Activated CD4-positive, alpha-beta memory T cell treated with anti-CD3 and anti-CD28 coated beads for 36 hours (primary cell): ENCODE measurements at regions of chr16 and their contacts with region 1.

Region 1: GRCh38 chr16:57277586-57277985 is 6.9 kb downstream of the PLLP start:
- DNase-seq: peak; percentile 84
- H3K4me3 Mint-ChIP-seq: peak overlapping the region; percentile 20
- H3K27ac Mint-ChIP-seq: peak overlapping the region; percentile 5
- H3K4me1 Mint-ChIP-seq: peaks cover 22% of the 10 kb centered on the region
- H3K27me3 Mint-ChIP-seq: no peaks in the 10 kb centered on the region

Region 2: DNA sequence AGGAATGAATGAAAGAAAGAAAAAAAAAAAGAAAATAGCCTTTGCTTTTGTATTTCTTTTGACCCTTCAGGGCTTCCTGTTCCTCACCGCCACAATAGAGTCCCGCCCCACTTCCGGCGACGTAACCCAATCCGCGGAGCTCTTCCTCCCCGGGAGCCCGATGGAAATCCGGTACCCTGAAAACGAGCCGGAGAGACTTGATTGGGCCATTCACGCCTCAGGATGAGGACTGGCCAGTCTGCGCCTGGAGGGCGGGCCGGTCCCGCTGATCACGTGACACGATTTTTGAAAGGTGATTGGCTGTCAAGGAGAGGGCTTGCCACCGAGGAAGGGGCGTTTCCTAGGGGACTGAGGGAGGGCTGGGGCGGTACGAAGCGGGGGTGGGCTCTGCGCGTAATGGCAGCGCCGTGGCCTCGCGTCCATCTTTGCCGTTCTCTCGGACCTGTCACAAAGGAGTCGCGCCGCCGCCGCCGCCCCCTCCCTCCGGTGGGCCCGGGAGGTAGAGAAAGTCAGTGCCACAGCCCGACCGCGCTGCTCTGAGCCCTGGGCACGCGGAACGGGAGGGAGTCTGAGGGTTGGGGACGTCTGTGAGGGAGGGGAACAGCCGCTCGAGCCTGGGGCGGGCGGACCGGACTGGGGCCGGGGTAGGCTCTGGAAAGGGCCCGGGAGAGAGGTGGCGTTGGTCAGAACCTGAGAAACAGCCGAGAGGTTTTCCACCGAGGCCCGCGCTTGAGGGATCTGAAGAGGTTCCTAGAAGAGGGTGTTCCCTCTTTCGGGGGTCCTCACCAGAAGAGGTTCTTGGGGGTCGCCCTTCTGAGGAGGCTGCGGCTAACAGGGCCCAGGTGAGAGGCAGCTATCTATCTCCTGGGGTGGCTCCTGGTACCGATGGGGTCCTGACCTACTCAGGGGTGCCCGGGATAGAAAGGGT is 91.4 kb before region 1 on chr16 and contains the starts of genes PSME3IP1 and RSPRY1:
- CTCF ChIA-PET with region 1: no interaction called
- POLR2A ChIA-PET with region 1: no interaction called
- intact Hi-C with region 1: no loop called
- DNase-seq: peak; percentile 100
- H3K4me3 Mint-ChIP-seq: peak within 1 kb of the TSS; percentile 92
- H3K27ac Mint-ChIP-seq: peak within 1 kb of the TSS; percentile 81
- H3K4me1 Mint-ChIP-seq: peaks cover 36% of the 10 kb centered on the region
- H3K27me3 Mint-ChIP-seq: no peaks in the 10 kb centered on the region
- total RNA-seq, gene PSME3IP1: 101 to 102 TPM
- total RNA-seq, gene RSPRY1: 31.5 to 33.3 TPM

Region 3: GRCh38 chr16:57265850-57266530 is 11.6 kb before region 1 on chr16:
- CTCF ChIA-PET with region 1: no interaction called
- POLR2A ChIA-PET with region 1: no interaction called
- intact Hi-C with region 1: loop called (anchors 1 kb)
- DNase-seq: no peak
- H3K4me3 Mint-ChIP-seq: no peak overlapping the region
- H3K27ac Mint-ChIP-seq: peak overlapping the region; percentile 29
- H3K4me1 Mint-ChIP-seq: peaks cover 32% of the 10 kb centered on the region
- H3K27me3 Mint-ChIP-seq: no peaks in the 10 kb centered on the region